ENCODE measurements at regions of chr6 and their contacts with region 1.

Region 1: GRCh38 chr6:121430514-121431460 is 4.7 kb upstream of the GJA1 start:
- DNase-seq: no peak
- H3K4me3 ChIP-seq: peak overlapping the region; percentile 30
- H3K27ac ChIP-seq: peak overlapping the region; percentile 95
- H3K4me1 ChIP-seq: peaks cover 29% of the 10 kb centered on the region
- H3K27me3 ChIP-seq: no peaks in the 10 kb centered on the region
- CTCF ChIP-seq: peak; percentile 79

Region 2: GRCh38 chr6:120908767-120909166 is 522.0 kb before region 1 on chr6:
- intact Hi-C with region 1: no loop called
- DNase-seq: no peak
- H3K4me3 ChIP-seq: no peak overlapping the region
- H3K27ac ChIP-seq: no peak overlapping the region
- H3K4me1 ChIP-seq: no peaks in the 10 kb centered on the region
- H3K27me3 ChIP-seq: no peaks in the 10 kb centered on the region
- CTCF ChIP-seq: no peak

Region 3: DNA sequence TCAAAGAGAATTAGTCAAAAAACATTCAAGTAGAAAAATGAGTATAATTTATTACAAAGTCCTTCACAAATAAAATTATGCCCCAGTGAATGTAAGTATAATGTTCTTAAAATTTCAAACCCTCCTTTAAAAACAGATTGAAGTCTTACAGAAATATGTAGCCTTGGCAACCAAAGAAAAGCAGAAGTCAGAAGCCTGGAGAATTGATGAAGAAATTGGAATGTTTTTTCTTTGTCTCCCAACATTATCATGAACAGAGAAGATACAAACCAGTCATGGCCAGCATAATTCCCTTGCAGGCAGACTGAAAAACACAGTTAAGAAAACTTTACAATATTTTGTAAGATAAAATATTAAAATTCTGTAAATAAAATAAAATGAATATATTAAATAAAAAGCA is 318.4 kb before region 1 on chr6:
- intact Hi-C with region 1: no loop called
- DNase-seq: no peak
- H3K4me3 ChIP-seq: no peak overlapping the region
- H3K27ac ChIP-seq: no peak overlapping the region
- H3K4me1 ChIP-seq: no peaks in the 10 kb centered on the region
- H3K27me3 ChIP-seq: no peaks in the 10 kb centered on the region
- CTCF ChIP-seq: no peak

Region 4: DNA sequence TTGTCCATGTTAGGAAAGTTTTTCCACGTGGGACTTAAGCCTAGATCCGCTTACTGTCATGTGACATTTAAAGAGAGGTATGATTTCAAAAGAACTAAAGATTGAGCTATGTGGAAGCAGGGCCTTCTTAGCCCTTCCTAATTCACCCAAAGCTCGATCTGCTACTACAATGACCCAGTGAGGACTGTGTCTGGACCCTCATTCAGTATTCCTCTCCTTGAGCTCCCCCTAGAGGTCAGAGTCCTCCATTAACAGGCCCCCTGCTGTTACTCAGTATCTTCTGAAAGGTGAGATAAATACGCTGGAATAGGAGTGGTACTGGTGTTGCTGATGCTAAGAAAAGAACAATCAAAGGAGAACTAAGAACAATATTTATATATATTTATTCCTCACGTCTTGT is 418.7 kb after region 1 on chr6:
- intact Hi-C with region 1: loop called (anchors 5 kb)
- DNase-seq: peak; percentile 17
- H3K4me3 ChIP-seq: no peak overlapping the region
- H3K27ac ChIP-seq: peak overlapping the region; percentile 49
- H3K4me1 ChIP-seq: peaks cover 51% of the 10 kb centered on the region
- H3K27me3 ChIP-seq: no peaks in the 10 kb centered on the region
- CTCF ChIP-seq: peak; percentile 81

Region 5: GRCh38 chr6:122033539-122034181 is 602.9 kb after region 1 on chr6:
- intact Hi-C with region 1: loop called (anchors 5 kb)
- DNase-seq: no peak
- H3K4me3 ChIP-seq: no peak overlapping the region
- H3K27ac ChIP-seq: peak overlapping the region; percentile 44
- H3K4me1 ChIP-seq: peaks cover 7% of the 10 kb centered on the region
- H3K27me3 ChIP-seq: no peaks in the 10 kb centered on the region
- CTCF ChIP-seq: peak; percentile 75

Region 6: DNA sequence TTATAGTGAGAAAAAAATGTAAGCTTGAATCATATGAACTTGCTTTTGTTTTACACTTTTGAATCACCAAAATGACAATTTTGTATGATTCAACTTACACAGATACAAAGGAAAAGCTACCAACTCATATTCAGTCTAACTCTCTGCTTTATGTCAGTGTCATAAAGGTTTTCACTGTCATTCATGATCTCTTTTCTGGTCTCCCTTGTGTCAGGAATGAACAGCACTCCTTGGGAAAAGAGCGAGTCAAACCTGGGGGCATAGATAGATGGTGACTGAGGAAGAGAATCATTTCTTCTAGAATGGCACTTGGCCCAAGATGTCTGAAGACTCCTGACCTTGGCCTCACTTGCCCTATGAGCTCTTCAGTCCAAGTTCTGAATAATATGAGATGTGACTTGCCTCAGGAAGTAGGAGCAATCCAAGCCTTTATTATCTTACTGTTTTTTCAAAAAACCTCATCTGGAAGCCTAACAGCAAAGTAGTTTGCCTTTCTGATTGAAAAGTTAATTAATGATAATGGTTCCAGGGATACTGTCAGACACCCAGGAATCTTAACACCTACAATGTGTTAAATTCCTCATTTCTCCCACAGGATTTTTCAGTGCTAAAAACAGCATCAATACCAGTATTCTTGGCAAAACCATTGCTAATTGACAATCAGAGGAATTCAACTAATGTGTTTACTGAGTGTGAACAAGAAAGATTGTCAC is 698.7 kb after region 1 on chr6:
- intact Hi-C with region 1: loop called (anchors 10 kb)
- DNase-seq: no peak
- H3K4me3 ChIP-seq: peak overlapping the region; percentile 22
- H3K27ac ChIP-seq: peak overlapping the region; percentile 89
- H3K4me1 ChIP-seq: peaks cover 10% of the 10 kb centered on the region
- H3K27me3 ChIP-seq: no peaks in the 10 kb centered on the region
- CTCF ChIP-seq: peak; percentile 15

Region 7: GRCh38 chr6:122184401-122184827 is 753.6 kb after region 1 on chr6:
- intact Hi-C with region 1: loop called (anchors 5 kb)
- DNase-seq: no peak
- H3K4me3 ChIP-seq: peak overlapping the region; percentile 55
- H3K27ac ChIP-seq: peak overlapping the region; percentile 27
- H3K4me1 ChIP-seq: peaks cover 16% of the 10 kb centered on the region
- H3K27me3 ChIP-seq: no peaks in the 10 kb centered on the region
- CTCF ChIP-seq: peak; percentile 64